Activated CD4-positive, alpha-beta memory T cell treated with anti-CD3 and anti-CD28 coated beads for 36 hours (primary cell): ENCODE measurements at regions of chr12 and their contacts with region 1.

Region 1: DNA sequence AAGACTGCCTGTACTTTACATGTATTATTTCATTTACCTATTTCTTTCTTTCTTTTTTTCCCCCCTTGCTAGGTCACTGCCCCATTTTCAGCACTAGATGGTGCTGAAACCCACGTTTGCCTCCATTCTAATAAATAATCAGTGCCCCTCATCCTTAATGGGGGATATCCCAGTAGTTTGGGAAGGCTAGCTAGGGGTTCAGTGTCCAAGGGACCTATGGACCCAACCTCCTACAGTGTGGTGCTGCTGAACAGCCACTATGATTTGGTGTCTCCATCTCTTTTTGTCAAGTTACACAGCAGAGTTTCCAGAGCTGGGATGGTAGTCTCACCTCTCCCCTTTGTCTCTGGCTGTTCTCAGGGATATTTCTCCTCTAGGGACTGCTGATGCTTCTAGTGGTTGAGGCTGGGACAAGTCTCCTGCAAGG is 6.5 kb upstream of the HCFC2 start:
- DNase-seq: no peak
- H3K4me3 Mint-ChIP-seq: no peak overlapping the region
- H3K27ac Mint-ChIP-seq: no peak overlapping the region
- H3K4me1 Mint-ChIP-seq: no peaks in the 10 kb centered on the region
- H3K27me3 Mint-ChIP-seq: peaks cover 24% of the 10 kb centered on the region

Region 2: GRCh38 chr12:103241184-103241583 is 816.6 kb before region 1 on chr12:
- CTCF ChIA-PET with region 1: no interaction called
- POLR2A ChIA-PET with region 1: no interaction called
- intact Hi-C with region 1: no loop called
- DNase-seq: no peak
- H3K4me3 Mint-ChIP-seq: no peak overlapping the region
- H3K27ac Mint-ChIP-seq: no peak overlapping the region
- H3K4me1 Mint-ChIP-seq: no peaks in the 10 kb centered on the region
- H3K27me3 Mint-ChIP-seq: no peaks in the 10 kb centered on the region

Region 3: GRCh38 chr12:104046306-104046705 is 11.5 kb before region 1 on chr12:
- CTCF ChIA-PET with region 1: interaction called, 10 read pairs
- POLR2A ChIA-PET with region 1: no interaction called
- intact Hi-C with region 1: no loop called
- DNase-seq: no peak
- H3K4me3 Mint-ChIP-seq: no peak overlapping the region
- H3K27ac Mint-ChIP-seq: no peak overlapping the region
- H3K4me1 Mint-ChIP-seq: peaks cover 5% of the 10 kb centered on the region
- H3K27me3 Mint-ChIP-seq: peaks cover 13% of the 10 kb centered on the region